Activated CD8-positive, alpha-beta memory T cell treated with anti-CD3 and anti-CD28 coated beads, Interleukin-2, amount 10 ng/mL, durations not matched to agents 7 days and 5 days (primary cell): ENCODE measurements at regions of chr7 and their contacts with region 1.

Region 1: DNA sequence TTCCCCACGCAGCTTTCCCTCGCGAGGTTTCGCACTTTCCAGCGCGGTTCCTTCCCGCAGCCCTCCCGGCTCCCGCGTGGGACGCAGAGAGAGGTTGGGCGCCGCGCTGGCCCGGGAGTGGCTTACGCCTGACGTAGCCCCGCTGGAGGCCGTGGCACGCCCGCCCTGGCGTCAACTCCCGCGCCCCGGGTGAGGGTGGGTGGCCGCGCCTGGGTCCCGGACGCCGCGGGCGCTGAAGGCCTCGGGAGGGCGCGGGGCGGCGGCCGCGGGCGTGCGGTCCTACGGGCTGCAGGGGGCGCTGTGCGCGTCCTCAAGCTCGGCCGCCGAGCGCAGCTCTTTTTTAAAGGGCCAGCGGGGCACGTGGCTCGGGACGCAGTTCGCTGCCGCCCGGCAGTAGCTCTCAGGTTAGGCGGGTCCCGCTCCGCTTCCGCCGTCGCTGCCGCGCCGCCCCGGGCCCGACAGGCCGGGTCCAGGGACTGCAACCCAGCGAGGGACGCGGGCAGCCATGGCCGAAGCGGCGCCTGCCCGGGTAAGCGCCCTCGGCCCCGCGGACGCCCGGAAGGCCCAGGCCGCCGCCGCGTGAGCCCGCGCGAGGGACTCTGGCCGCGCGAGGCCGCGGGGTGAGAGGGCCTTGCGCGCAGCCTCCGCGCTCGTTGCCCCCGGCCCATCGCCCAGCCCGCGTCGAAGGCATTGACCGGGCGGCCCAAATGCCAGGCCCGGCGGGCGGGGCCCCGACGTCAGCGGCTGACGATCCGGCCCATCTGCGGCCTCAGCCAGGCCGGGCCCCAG is at the start of gene ZNF783:
- DNase-seq: peak; percentile 88
- ATAC-seq: peak; percentile 87
- H3K4me3 Mint-ChIP-seq: peak within 1 kb of the TSS; percentile 74
- H3K27ac Mint-ChIP-seq: peak within 1 kb of the TSS; percentile 77
- H3K4me1 Mint-ChIP-seq: peaks cover 26% of the 10 kb centered on the region
- H3K27me3 Mint-ChIP-seq: no peaks in the 10 kb centered on the region
- total RNA-seq, gene ZNF783: 14.8 to 15.5 TPM

Region 2: DNA sequence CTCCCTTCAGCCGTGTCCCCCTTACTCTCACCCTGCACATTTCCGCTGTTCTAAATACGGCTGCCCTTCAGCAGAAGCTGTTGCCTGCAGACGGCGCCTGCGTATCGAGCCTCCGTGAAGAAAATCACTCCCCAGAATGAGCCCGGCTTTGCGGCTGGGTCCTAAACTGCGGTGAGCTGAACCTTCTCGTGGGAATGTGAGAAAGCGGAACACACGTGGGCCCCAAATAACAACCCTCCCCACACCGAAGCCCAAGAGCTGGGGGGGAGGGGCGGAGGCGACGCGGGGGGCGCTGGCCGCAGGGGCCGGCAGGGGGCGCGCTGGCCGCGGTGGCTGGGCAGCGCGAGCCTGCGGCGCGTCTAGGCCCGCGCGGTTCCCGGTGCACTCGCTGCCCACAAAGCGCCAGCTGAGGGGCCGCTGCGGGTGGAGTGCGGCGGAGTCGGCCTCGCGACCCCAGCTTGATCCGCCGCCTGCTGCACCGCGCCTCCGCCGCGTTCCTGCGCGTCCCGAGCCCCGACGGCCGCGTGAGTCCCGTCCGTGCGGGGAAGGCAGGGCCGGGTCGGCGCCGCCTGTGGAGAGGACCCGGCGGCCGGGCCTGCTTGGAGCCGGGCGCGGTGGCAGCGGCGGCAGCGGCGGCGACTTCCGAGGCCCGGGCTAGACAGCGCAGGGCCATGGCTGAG is 114.8 kb before region 1 on chr7 and contains the start of gene ZNF398:
- CTCF ChIA-PET with region 1: interaction called, 18 read pairs
- DNase-seq: peak; percentile 79
- ATAC-seq: peak; percentile 82
- H3K4me3 Mint-ChIP-seq: peak within 1 kb of the TSS; percentile 90
- H3K27ac Mint-ChIP-seq: peak within 1 kb of the TSS; percentile 88
- H3K4me1 Mint-ChIP-seq: peaks cover 29% of the 10 kb centered on the region
- H3K27me3 Mint-ChIP-seq: no peaks in the 10 kb centered on the region
- total RNA-seq, gene ZNF398: 12.1 to 13.2 TPM

Region 3: GRCh38 chr7:149195180-149196150 is 66.6 kb before region 1 on chr7 and contains the start of gene ZNF282:
- CTCF ChIA-PET with region 1: interaction called, 16 read pairs
- DNase-seq: peak; percentile 87
- ATAC-seq: peak; percentile 93
- H3K4me3 Mint-ChIP-seq: peak within 1 kb of the TSS; percentile 94
- H3K27ac Mint-ChIP-seq: peak within 1 kb of the TSS; percentile 93
- H3K4me1 Mint-ChIP-seq: peaks cover 53% of the 10 kb centered on the region
- H3K27me3 Mint-ChIP-seq: peaks cover 2% of the 10 kb centered on the region
- total RNA-seq, gene ZNF282: 42.0 to 49.7 TPM

Region 4: GRCh38 chr7:149239345-149240191 is 22.5 kb before region 1 on chr7 and contains the start of gene ZNF212:
- CTCF ChIA-PET with region 1: interaction called, 13 read pairs
- DNase-seq: peak; percentile 92
- ATAC-seq: peak; percentile 100
- H3K4me3 Mint-ChIP-seq: peak within 1 kb of the TSS; percentile 97
- H3K27ac Mint-ChIP-seq: peak within 1 kb of the TSS; percentile 88
- H3K4me1 Mint-ChIP-seq: peaks cover 25% of the 10 kb centered on the region
- H3K27me3 Mint-ChIP-seq: no peaks in the 10 kb centered on the region
- total RNA-seq, gene ZNF212: 12.8 to 14.2 TPM

Region 5: DNA sequence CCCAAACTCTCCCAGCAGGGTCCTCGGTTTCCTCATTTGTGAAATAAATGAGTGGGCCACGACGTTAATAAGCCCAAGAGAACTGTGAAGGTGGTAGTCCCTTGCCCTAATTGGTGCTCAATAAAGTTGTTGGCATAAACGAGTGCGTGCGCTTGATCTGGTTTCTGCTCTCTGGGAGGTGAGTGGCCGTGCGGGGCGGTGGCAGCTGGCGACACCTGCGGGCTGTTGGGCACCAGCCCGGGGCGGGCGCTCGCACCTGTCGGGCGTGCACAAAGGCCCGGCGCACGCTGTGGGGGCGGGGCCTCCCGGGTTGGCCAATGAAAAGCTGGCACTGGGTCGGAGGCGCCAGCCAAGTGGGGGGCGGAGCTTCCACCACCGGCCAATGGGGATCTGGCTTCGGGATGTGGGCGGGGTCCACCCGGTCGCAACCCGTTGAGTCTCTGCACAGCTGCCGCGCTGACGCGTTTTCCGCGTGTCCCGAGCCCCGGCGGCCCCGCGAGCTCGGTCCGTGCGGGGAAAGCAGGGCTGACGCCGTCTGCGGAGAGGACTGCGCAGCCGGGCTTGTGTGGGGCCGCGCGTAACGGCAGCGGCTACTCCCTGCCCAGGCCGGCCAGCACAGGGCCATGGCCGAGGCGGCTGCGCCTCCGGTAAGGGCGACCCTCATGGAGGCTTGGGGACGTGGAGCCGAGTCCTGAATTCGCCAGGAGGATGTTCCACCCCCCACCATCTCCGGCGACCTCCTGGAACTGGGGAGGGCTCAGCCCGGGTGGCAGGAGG is 23.0 kb after region 1 on chr7:
- CTCF ChIA-PET with region 1: interaction called, 24 read pairs
- DNase-seq: peak; percentile 98
- ATAC-seq: peak; percentile 98
- H3K4me3 Mint-ChIP-seq: peak overlapping the region; percentile 77
- H3K27ac Mint-ChIP-seq: peak overlapping the region; percentile 61
- H3K4me1 Mint-ChIP-seq: peaks cover 37% of the 10 kb centered on the region
- H3K27me3 Mint-ChIP-seq: no peaks in the 10 kb centered on the region

Region 6: DNA sequence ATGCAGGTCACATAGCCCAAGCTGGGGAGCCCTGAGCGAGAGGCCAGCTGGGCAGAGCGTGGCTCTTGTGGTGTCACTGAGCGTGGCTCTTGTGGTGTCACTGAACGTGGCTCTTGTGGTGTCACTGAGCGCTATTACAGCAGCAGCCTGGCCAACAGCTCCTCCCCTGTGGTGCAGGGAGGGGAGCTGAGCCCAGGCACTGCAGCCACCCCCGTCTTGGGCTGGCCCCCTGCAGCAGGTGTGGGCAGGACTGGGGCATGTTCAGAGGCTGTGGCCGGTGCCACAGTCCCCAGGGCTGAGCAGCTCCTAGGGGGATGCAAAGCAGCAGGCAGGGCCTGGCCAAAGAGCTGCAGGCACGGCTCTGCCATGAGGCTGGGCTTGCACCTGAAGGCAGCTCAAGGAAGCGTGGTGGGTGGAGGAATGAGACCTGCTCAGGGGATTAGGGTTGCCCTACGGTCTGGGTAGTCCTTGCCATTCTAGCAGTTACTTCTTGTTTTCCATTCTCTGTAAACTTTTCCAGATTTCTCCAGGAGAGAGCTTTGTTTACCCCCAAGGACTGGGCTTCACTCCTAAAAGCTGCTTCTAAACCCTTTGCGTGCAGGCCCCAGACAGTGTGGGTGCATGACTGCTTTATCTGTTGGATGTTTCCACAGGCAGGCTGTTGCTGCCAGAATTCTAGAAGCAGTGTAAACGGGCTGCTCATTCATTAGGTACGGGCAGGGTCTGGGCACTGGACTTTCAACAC is 29.2 kb after region 1 on chr7:
- CTCF ChIA-PET with region 1: interaction called, 24 read pairs
- DNase-seq: peak; percentile 74
- ATAC-seq: peak; percentile 75
- H3K4me3 Mint-ChIP-seq: no peak overlapping the region
- H3K27ac Mint-ChIP-seq: peak overlapping the region; percentile 66
- H3K4me1 Mint-ChIP-seq: peaks cover 34% of the 10 kb centered on the region
- H3K27me3 Mint-ChIP-seq: no peaks in the 10 kb centered on the region

Region 7: GRCh38 chr7:149422129-149422913 is 160.3 kb after region 1 on chr7:
- CTCF ChIA-PET with region 1: interaction called, 26 read pairs
- DNase-seq: peak; percentile 74
- ATAC-seq: peak; percentile 98
- H3K4me3 Mint-ChIP-seq: peak overlapping the region; percentile 69
- H3K27ac Mint-ChIP-seq: peak overlapping the region; percentile 36
- H3K4me1 Mint-ChIP-seq: peaks cover 13% of the 10 kb centered on the region
- H3K27me3 Mint-ChIP-seq: peaks cover 15% of the 10 kb centered on the region